SK-N-SH (cell line): ENCODE measurements at regions of chr2 and their contacts with region 1.

Region 1: GRCh38 chr2:40554668-40555285 is 102.9 kb upstream of the SLC8A1 start:
- DNase-seq: peak; percentile 32
- H3K4me3 ChIP-seq: no peak overlapping the region; a peak in 1 of 4 replicates
- H3K27ac ChIP-seq: no peak overlapping the region
- H3K4me1 ChIP-seq: peaks cover 0 to 4% of the 10 kb centered on the region in 2 experiments; a peak in 2 of 4 replicates
- H3K27me3 ChIP-seq: no peaks in the 10 kb centered on the region
- CTCF ChIP-seq: peak; percentile 90
- EP300 ChIP-seq: no peak
- RAD21 ChIP-seq: peak; percentile 82

Region 2: GRCh38 chr2:40488101-40488601 is 66.6 kb before region 1 on chr2:
- CTCF ChIA-PET with region 1: interaction called, 11 read pairs
- POLR2A ChIA-PET with region 1: no interaction called
- DNase-seq: peak; percentile 32
- H3K4me3 ChIP-seq: no peak overlapping the region
- H3K27ac ChIP-seq: no peak overlapping the region
- H3K4me1 ChIP-seq: peaks cover 0 to 3% of the 10 kb centered on the region in 2 experiments; a peak in 1 of 4 replicates
- H3K27me3 ChIP-seq: no peaks in the 10 kb centered on the region
- CTCF ChIP-seq: peak; percentile 74
- EP300 ChIP-seq: no peak
- RAD21 ChIP-seq: peak; percentile 58

Region 3: GRCh38 chr2:40543381-40543780 is 11.4 kb before region 1 on chr2:
- CTCF ChIA-PET with region 1: interaction called, 18 read pairs
- POLR2A ChIA-PET with region 1: no interaction called
- DNase-seq: no peak
- H3K4me3 ChIP-seq: no peak overlapping the region
- H3K27ac ChIP-seq: no peak overlapping the region
- H3K4me1 ChIP-seq: no peaks in the 10 kb centered on the region
- H3K27me3 ChIP-seq: no peaks in the 10 kb centered on the region
- CTCF ChIP-seq: no peak
- EP300 ChIP-seq: no peak
- RAD21 ChIP-seq: no peak

Region 4: GRCh38 chr2:41431756-41432155 is 877.0 kb after region 1 on chr2:
- CTCF ChIA-PET with region 1: no interaction called
- POLR2A ChIA-PET with region 1: no interaction called
- DNase-seq: peak; percentile 4
- H3K4me3 ChIP-seq: no peak overlapping the region
- H3K27ac ChIP-seq: no peak overlapping the region
- H3K4me1 ChIP-seq: no peaks in the 10 kb centered on the region; a peak in 1 of 4 replicates
- H3K27me3 ChIP-seq: no peaks in the 10 kb centered on the region
- CTCF ChIP-seq: no peak
- EP300 ChIP-seq: no peak
- RAD21 ChIP-seq: no peak